ENCODE measurements at regions of chr6 and their contacts with region 1.

Region 1: GRCh38 chr6:1535295-1535694 is 74.4 kb upstream of the FOXC1 start:
- DNase-seq: peak; percentile 64
- H3K4me3 Mint-ChIP-seq: peak overlapping the region; percentile 27
- H3K27ac Mint-ChIP-seq: peak overlapping the region; percentile 75
- H3K4me1 Mint-ChIP-seq: peaks cover 27% of the 10 kb centered on the region
- H3K27me3 Mint-ChIP-seq: no peaks in the 10 kb centered on the region

Region 2: DNA sequence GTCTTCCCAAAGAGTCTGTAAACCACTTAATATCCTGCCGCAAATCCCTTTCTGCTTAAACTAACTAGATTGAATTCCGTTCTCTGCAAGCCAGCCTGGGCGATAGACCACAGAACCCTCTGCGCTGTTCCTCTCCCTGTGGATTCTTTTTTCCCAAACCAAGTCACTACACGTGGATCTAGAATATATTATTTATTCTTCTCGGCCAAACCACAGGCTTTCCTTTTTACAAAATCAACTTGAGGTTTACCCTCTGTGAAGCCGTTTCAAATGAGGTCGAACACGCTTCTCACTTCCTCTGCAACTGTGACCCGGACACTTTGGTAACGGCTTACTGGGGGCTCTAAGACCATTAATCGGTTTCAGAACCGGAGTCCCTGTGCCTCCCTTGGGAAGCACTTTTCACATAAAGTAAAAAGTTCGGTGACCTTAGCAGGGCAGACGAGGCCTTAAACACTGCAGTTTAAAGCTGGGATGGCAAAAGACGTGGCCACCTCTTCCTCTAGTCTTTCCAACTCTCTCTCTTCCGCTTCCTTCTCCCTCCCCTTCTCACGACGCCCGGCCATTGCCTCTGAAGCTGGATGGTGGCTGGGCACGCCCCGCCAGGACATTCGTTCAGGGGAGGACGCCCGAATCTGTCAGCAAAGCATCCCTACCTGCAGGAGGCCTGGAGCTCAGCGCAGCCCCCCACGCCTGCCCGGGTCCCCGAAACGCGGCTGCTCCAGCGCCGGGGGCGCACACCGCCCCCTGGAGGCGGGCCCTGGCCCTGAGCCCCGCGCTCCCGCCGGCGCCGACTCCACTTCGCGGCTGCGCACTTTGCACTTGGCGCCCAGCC is 19.4 kb after region 1 on chr6:
- CTCF ChIA-PET with region 1: interaction called, 10 read pairs
- DNase-seq: peak; percentile 70
- H3K4me3 Mint-ChIP-seq: peak overlapping the region; percentile 80
- H3K27ac Mint-ChIP-seq: peak overlapping the region; percentile 90
- H3K4me1 Mint-ChIP-seq: peaks cover 37% of the 10 kb centered on the region
- H3K27me3 Mint-ChIP-seq: peaks cover 35% of the 10 kb centered on the region

Measured in activated naive CD4-positive, alpha-beta T cell treated with anti-CD3 and anti-CD28 coated beads, Interleukin-2, amount 10 ng/mL, durations not matched to agents 7 days and 5 days (primary cell).